PC-9 (cell line): ENCODE measurements at regions of chr20 and their contacts with region 1.

Region 1: GRCh38 chr20:8867181-8867740 is 201.6 kb upstream of the PLCB4 start:
- DNase-seq: no peak
- H3K4me3 ChIP-seq: no peak overlapping the region
- H3K27ac ChIP-seq: no peak overlapping the region
- H3K4me1 ChIP-seq: no peaks in the 10 kb centered on the region
- H3K27me3 ChIP-seq: no peaks in the 10 kb centered on the region
- CTCF ChIP-seq: no peak

Region 2: GRCh38 chr20:8583566-8584043 is 283.7 kb before region 1 on chr20:
- CTCF ChIA-PET with region 1: no interaction called
- POLR2A ChIA-PET with region 1: no interaction called
- intact Hi-C with region 1: no loop called
- DNase-seq: no peak
- H3K4me3 ChIP-seq: no peak overlapping the region
- H3K27ac ChIP-seq: no peak overlapping the region
- H3K4me1 ChIP-seq: no peaks in the 10 kb centered on the region
- H3K27me3 ChIP-seq: no peaks in the 10 kb centered on the region
- CTCF ChIP-seq: no peak

Region 3: GRCh38 chr20:8602389-8603116 is 264.7 kb before region 1 on chr20:
- CTCF ChIA-PET with region 1: no interaction called
- POLR2A ChIA-PET with region 1: no interaction called
- intact Hi-C with region 1: no loop called
- DNase-seq: no peak
- H3K4me3 ChIP-seq: no peak overlapping the region
- H3K27ac ChIP-seq: no peak overlapping the region
- H3K4me1 ChIP-seq: no peaks in the 10 kb centered on the region
- H3K27me3 ChIP-seq: no peaks in the 10 kb centered on the region
- CTCF ChIP-seq: no peak

Region 4: GRCh38 chr20:8777911-8778310 is 89.3 kb before region 1 on chr20:
- CTCF ChIA-PET with region 1: no interaction called
- POLR2A ChIA-PET with region 1: no interaction called
- intact Hi-C with region 1: no loop called
- DNase-seq: no peak
- H3K4me3 ChIP-seq: no peak overlapping the region
- H3K27ac ChIP-seq: no peak overlapping the region
- H3K4me1 ChIP-seq: no peaks in the 10 kb centered on the region
- H3K27me3 ChIP-seq: no peaks in the 10 kb centered on the region
- CTCF ChIP-seq: no peak

Region 5: GRCh38 chr20:8909596-8909995 is 42.3 kb after region 1 on chr20:
- CTCF ChIA-PET with region 1: no interaction called
- POLR2A ChIA-PET with region 1: no interaction called
- intact Hi-C with region 1: no loop called
- DNase-seq: no peak
- H3K4me3 ChIP-seq: no peak overlapping the region
- H3K27ac ChIP-seq: no peak overlapping the region
- H3K4me1 ChIP-seq: no peaks in the 10 kb centered on the region
- H3K27me3 ChIP-seq: no peaks in the 10 kb centered on the region
- CTCF ChIP-seq: no peak

Region 6: DNA sequence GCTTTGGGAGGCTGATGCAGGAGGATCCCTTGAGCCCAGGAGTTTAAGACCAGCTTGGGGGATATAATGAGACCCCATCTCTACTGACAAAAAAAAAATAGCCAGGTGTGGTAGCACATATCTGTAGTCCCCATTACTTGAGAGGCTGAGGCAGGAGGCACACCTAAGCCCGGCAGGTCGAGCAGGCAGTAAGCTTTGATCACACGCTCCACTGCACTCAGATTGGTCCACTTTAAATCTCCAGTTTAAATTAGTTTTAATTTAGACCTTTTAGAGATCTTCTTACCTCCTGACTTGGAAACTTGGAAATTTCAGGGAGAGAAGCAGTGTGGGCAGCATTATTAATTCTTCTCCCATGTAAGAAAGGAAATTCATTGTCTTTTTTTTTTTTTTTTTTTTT is 184.9 kb after region 1 on chr20:
- CTCF ChIA-PET with region 1: no interaction called
- POLR2A ChIA-PET with region 1: interaction called, 16 read pairs
- intact Hi-C with region 1: no loop called
- DNase-seq: peak in 1 of 2 experiments; percentile 28
- H3K4me3 ChIP-seq: peak overlapping the region; percentile 40; the same call in 1 of the 2 replicates
- H3K27ac ChIP-seq: peak overlapping the region; percentile 96
- H3K4me1 ChIP-seq: peaks cover 31% of the 10 kb centered on the region
- H3K27me3 ChIP-seq: no peaks in the 10 kb centered on the region
- CTCF ChIP-seq: no peak